Activated naive CD4-positive, alpha-beta T cell treated with anti-CD3 and anti-CD28 coated beads, Interleukin-2, amount 10 ng/mL, durations not matched to agents 7 days and 5 days (primary cell): ENCODE measurements at regions of chr11 and their contacts with region 1.

Region 1: DNA sequence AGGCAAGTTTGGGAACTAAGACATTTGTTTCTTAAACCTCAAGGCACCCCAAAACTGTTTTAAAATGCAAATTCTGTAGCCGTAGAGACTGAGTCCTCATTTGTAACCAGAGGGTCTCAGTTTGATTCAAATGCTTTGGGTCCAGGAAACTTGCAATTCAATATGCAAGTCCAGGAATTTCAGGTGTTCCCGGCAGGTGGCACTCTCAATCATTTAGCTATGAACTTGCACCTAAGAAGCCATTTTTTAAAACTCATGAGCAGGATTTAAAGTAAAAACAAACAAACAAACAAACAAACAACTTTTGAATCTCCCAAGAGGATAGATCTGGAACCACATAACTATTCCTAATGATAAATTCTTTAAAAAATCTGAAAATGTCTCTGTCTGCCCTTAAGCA is 8.7 kb upstream of the ABTB2 start:
- DNase-seq: peak; percentile 41
- H3K4me3 Mint-ChIP-seq: no peak overlapping the region
- H3K27ac Mint-ChIP-seq: no peak overlapping the region
- H3K4me1 Mint-ChIP-seq: peaks cover 8% of the 10 kb centered on the region
- H3K27me3 Mint-ChIP-seq: peaks cover 31% of the 10 kb centered on the region

Region 2: DNA sequence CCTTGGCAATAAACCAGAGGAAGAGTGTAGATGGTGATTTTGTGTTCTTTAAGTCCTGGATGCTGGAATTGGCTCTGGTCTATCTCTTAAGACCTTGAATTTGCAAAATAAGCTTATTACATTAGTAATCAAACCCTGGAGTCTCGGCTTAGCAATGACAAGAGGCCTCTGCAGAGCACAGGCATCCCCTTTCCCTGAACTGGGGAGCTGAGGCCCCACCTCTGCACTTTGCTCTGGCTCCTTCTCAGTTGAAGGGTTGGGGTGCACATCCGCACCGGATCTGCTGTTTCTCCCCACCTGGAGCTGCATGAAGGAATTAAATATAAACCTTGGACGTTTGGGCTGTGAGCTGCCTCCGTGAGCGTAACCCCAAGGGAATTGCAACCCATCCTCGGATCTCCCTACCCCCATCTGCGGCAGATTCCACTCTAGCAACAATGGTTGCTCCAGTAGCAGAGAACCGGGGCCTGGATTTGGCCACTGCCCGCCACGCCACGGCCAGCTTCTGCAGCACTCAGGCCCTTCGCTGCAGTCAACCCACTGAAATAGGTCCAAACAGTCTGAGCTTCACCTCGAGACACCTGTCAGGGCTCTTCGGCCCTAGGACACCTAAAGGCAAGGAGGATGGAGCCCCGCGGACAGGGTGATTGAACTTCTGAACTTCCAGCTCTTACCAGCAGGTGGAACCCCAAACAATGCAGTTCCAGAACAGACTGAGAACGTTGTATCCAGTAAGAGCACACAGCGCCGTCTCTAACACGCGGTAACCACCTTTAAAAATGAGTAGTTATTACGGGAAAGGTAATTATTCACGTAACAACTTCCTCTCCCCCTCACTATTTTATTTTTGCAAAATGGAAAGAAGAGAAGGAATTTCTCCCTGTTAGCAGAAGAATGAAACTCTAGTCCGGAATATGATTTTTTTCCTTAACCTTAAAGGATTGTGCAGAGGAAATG is 369.7 kb before region 1 on chr11:
- CTCF ChIA-PET with region 1: interaction called, 12 read pairs
- DNase-seq: peak; percentile 83
- H3K4me3 Mint-ChIP-seq: no peak overlapping the region
- H3K27ac Mint-ChIP-seq: no peak overlapping the region
- H3K4me1 Mint-ChIP-seq: peaks cover 9% of the 10 kb centered on the region
- H3K27me3 Mint-ChIP-seq: peaks cover 50% of the 10 kb centered on the region

Region 3: DNA sequence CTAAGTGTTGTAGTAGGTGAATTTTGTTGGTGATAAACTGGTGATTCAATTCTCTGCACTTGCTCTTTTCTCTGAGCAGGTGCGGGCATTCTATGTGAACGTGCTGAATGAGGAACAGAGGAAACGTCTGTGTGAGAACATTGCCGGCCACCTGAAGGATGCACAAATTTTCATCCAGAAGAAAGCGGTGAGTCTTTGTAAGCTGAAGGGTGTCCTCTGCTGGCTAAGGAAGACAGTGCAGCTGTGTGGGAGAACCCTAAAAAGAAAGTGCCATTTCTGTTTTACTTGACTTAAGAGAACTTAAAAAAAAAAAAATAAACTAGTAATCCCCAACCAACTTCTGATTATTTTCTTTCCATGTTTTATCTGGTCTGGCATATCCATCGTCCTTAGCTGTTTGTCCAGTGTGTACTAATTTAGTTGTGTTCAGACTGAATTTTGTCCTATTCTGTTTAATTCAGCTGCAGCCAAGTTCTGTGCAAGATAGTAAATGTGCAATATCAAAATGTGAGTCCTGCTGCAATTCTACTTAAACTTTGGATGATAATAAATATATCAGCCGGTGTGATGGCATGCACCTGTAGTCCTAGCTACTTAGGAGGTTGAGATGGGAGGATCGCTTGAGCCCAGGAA is 101.8 kb after region 1 on chr11:
- CTCF ChIA-PET with region 1: interaction called, 29 read pairs
- DNase-seq: peak; percentile 67
- H3K4me3 Mint-ChIP-seq: no peak overlapping the region
- H3K27ac Mint-ChIP-seq: no peak overlapping the region
- H3K4me1 Mint-ChIP-seq: peaks cover 9% of the 10 kb centered on the region
- H3K27me3 Mint-ChIP-seq: no peaks in the 10 kb centered on the region

Region 4: GRCh38 chr11:34492806-34493414 is 126.4 kb after region 1 on chr11:
- CTCF ChIA-PET with region 1: interaction called, 16 read pairs
- DNase-seq: peak; percentile 54
- H3K4me3 Mint-ChIP-seq: no peak overlapping the region
- H3K27ac Mint-ChIP-seq: no peak overlapping the region
- H3K4me1 Mint-ChIP-seq: no peaks in the 10 kb centered on the region
- H3K27me3 Mint-ChIP-seq: peaks cover 11% of the 10 kb centered on the region